ENCODE measurements at regions of chr17 and their contacts with region 1.

Region 1: DNA sequence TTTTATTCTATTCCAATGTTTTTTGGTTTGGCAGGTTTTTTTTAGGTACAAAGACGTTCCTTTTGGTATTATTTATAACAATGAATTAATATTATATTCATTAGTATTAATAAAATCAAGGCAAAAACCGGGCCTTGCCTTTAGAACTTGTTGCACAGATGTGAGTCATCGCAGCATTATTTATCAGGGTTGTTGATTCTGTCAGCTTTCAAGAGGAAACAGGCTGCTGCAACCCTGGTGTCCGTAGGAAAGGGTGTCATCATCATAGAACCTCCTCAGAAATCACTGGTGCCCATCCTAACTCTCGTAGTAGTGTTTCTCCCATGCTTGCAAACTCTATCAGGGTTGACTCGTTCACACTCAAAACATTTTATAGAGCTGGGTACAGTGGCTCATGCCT is 10.2 kb upstream of the LRRC37B start:
- DNase-seq: no peak
- ATAC-seq: no peak
- H3K4me3 Mint-ChIP-seq: no peak overlapping the region
- H3K27ac Mint-ChIP-seq: no peak overlapping the region
- H3K4me1 Mint-ChIP-seq: no peaks in the 10 kb centered on the region
- H3K27me3 Mint-ChIP-seq: no peaks in the 10 kb centered on the region

Region 2: DNA sequence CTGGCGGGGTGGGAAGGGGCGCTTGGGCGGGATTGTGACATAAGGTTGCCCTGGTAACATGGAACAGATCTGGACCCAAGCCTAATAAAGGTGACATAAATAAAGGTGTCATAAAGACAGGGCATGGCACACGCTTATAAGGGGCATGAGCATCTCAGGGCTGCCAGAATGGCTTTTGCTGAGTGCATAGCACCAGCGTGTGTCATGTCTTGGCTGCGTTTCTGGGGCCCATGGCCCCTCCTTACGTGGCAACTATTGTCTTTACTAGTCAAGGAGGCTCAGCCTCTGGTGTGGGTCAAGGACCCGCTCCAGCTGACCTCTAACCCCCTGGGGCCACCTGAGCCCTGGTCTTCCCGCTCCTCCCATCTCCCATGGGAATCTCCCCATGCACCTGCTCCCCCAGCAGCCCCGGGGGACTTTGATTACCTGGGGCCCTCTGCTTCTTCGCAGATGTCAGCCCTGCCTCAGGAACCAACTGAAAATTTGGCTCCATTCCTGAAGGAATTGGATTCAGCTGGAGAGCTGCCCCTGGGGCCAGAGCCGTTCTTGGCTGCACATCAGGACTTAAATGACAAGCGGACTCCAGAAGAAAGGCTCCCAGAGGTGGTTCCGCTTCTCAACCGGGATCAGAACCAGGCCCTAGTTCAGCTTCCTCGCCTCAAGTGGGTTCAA is 24.1 kb after region 1 on chr17:
- CTCF ChIA-PET with region 1: no interaction called
- POLR2A ChIA-PET with region 1: no interaction called
- intact Hi-C with region 1: no loop called
- DNase-seq: no peak
- ATAC-seq: no peak
- H3K4me3 Mint-ChIP-seq: no peak overlapping the region
- H3K27ac Mint-ChIP-seq: no peak overlapping the region
- H3K4me1 Mint-ChIP-seq: peaks cover 8% of the 10 kb centered on the region
- H3K27me3 Mint-ChIP-seq: no peaks in the 10 kb centered on the region

Region 3: GRCh38 chr17:32357615-32358014 is 360.6 kb after region 1 on chr17:
- CTCF ChIA-PET with region 1: no interaction called
- POLR2A ChIA-PET with region 1: no interaction called
- intact Hi-C with region 1: loop called in 1 of 2 experiments (anchors 10 kb)
- DNase-seq: no peak
- ATAC-seq: no peak
- H3K4me3 Mint-ChIP-seq: no peak overlapping the region
- H3K27ac Mint-ChIP-seq: no peak overlapping the region
- H3K4me1 Mint-ChIP-seq: peaks cover 52% of the 10 kb centered on the region
- H3K27me3 Mint-ChIP-seq: no peaks in the 10 kb centered on the region

Region 4: GRCh38 chr17:32370426-32370825 is 373.4 kb after region 1 on chr17:
- CTCF ChIA-PET with region 1: no interaction called
- POLR2A ChIA-PET with region 1: no interaction called
- intact Hi-C with region 1: loop called (anchors 10 kb)
- DNase-seq: no peak
- ATAC-seq: peak; percentile 64
- H3K4me3 Mint-ChIP-seq: no peak overlapping the region
- H3K27ac Mint-ChIP-seq: no peak overlapping the region
- H3K4me1 Mint-ChIP-seq: peaks cover 27% of the 10 kb centered on the region
- H3K27me3 Mint-ChIP-seq: no peaks in the 10 kb centered on the region

Region 5: GRCh38 chr17:32470405-32471167 is 473.6 kb after region 1 on chr17:
- CTCF ChIA-PET with region 1: no interaction called
- POLR2A ChIA-PET with region 1: no interaction called
- intact Hi-C with region 1: no loop called
- DNase-seq: no peak
- ATAC-seq: no peak
- H3K4me3 Mint-ChIP-seq: no peak overlapping the region
- H3K27ac Mint-ChIP-seq: no peak overlapping the region
- H3K4me1 Mint-ChIP-seq: peaks cover 5% of the 10 kb centered on the region
- H3K27me3 Mint-ChIP-seq: no peaks in the 10 kb centered on the region